ENCODE measurements at regions of chr18 and their contacts with region 1.

Region 1: DNA sequence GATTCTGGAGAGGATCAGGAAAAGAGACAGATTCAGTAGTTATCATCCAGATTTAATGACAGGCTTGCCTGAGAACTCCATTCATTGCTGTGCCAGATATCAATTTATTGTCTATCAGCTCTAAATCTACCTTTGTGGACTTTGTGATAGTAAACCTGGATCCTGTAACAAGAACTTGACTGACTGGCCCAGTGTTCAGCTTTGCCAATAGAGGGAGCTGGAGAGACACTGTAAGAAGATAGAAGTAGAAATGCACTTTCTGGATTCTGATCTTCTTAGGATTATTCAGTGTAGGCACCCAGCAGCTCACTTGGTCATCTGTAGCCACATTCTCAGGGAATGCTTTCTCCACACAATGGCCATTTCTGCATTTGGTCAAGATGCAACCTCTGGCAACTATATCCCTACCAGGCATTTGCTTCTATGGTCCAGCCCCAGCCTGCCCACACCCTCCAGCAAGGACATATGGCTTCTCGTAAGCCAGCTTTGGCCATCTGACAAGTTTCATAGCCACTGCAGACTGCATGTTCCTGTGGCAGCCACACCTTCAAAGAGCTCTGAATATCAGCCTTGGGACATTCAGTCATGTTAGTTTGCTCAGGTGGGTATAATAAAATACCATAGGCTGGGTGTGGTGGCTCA is 6.1 kb upstream of the SERPINB8 start:
- DNase-seq: peak in 8 of 9 experiments; percentile 23 to 77 (median 51)
- ATAC-seq: peak; percentile 82
- H3K4me3 ChIP-seq: no peak overlapping the region
- H3K4me3 Mint-ChIP-seq: no peak overlapping the region
- H3K27ac ChIP-seq: no peak overlapping the region
- H3K27ac Mint-ChIP-seq: no peak overlapping the region
- H3K4me1 ChIP-seq: no peaks in the 10 kb centered on the region
- H3K4me1 Mint-ChIP-seq: peaks cover 2% of the 10 kb centered on the region
- H3K27me3 ChIP-seq: no peaks in the 10 kb centered on the region
- H3K27me3 Mint-ChIP-seq: peaks cover 21% of the 10 kb centered on the region
- CTCF ChIP-seq: peak; percentile 67

Region 2: DNA sequence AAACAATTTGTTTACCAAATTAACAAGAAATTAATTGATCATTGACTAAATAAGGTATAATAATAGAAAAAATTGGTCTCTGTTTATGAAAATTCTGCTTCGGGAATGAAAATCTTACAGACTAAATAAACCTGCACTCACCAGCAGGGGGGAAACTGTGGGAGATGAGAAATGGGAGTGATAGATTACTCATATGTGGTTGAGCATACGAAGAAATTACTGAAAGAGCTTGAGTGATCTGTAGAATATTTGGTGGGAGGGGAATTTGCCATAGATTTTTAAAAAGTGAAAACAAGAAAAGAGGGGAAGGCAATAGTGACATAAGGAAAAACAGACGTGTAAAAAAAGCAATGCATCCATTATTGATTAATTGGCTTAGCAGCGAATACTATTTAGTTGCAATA is 12.4 kb before region 1 on chr18:
- CTCF ChIA-PET with region 1: interaction called, 14 read pairs
- POLR2A ChIA-PET with region 1: interaction called, 5 read pairs
- intact Hi-C with region 1: no loop called
- DNase-seq: no peak
- ATAC-seq: no peak
- H3K4me3 ChIP-seq: no peak overlapping the region
- H3K4me3 Mint-ChIP-seq: no peak overlapping the region
- H3K27ac ChIP-seq: no peak overlapping the region
- H3K27ac Mint-ChIP-seq: no peak overlapping the region
- H3K4me1 ChIP-seq: no peaks in the 10 kb centered on the region
- H3K4me1 Mint-ChIP-seq: peaks cover 7% of the 10 kb centered on the region
- H3K27me3 ChIP-seq: peaks cover 0 to 4% of the 10 kb centered on the region in 2 experiments
- H3K27me3 Mint-ChIP-seq: peaks cover 26% of the 10 kb centered on the region
- CTCF ChIP-seq: no peak

Region 3: GRCh38 chr18:63994783-63995399 is 31.2 kb after region 1 on chr18:
- CTCF ChIA-PET with region 1: interaction called, 10 read pairs
- POLR2A ChIA-PET with region 1: no interaction called
- intact Hi-C with region 1: loop called (anchors 1 kb)
- DNase-seq: peak in 8 of 9 experiments; percentile 7 to 53 (median 40)
- ATAC-seq: peak; percentile 51
- H3K4me3 ChIP-seq: no peak overlapping the region
- H3K4me3 Mint-ChIP-seq: no peak overlapping the region
- H3K27ac ChIP-seq: no peak overlapping the region
- H3K27ac Mint-ChIP-seq: no peak overlapping the region
- H3K4me1 ChIP-seq: no peaks in the 10 kb centered on the region
- H3K4me1 Mint-ChIP-seq: no peaks in the 10 kb centered on the region
- H3K27me3 ChIP-seq: no peaks in the 10 kb centered on the region
- H3K27me3 Mint-ChIP-seq: peaks cover 2% of the 10 kb centered on the region
- CTCF ChIP-seq: peak; percentile 80